ENCODE measurements at regions of chr3 and their contacts with region 1.

Region 1: DNA sequence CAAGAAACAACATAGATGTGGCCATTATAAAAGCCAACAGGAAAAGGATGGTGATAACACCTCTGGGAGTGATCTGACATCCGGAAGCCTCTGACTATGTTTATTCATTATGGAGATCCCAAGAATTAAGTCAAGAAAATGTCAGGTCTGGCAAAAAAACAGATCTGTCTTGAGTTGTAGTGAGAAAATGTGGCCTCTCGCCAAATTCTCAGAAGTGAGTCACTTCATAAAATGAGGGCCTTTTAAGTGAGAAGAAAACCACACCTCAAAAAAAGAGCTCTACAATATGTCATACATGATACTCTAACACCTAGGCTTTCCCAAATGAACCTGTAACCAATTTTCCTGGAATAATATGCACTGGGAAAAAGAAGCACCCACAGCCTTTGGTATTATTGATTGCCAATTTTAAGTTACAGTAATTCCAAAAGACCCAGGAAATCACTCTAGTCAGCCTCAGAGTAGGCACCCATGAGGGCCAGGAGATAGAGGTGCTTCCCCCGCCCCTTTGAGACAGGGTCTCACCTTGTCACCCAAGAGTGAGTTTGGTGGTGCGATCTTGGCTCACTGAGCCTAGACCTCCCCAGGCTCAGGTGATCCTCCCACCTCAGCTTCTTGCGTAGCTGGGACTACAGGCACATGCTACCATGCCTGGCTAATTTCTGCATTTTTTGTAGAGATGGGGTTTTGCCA is 38.0 kb downstream of the CCR3 start:
- DNase-seq: no peak
- H3K4me3 ChIP-seq: no peak overlapping the region
- H3K27ac ChIP-seq: peak overlapping the region in 2 of 4 donors; percentile 6 to 40
- H3K4me1 ChIP-seq: no peaks in the 10 kb centered on the region
- H3K27me3 ChIP-seq: no peaks in the 10 kb centered on the region
- CTCF ChIP-seq: no peak
- EP300 ChIP-seq: no peak
- POLR2A ChIP-seq: no peak

Region 2: GRCh38 chr3:45712472-45713110 is 567.7 kb before region 1 on chr3:
- in situ Hi-C with region 1: no loop called
- intact Hi-C with region 1: no loop called
- DNase-seq: no peak
- H3K4me3 ChIP-seq: no peak overlapping the region
- H3K27ac ChIP-seq: no peak overlapping the region
- H3K4me1 ChIP-seq: no peaks in the 10 kb centered on the region
- H3K27me3 ChIP-seq: no peaks in the 10 kb centered on the region
- CTCF ChIP-seq: no peak
- EP300 ChIP-seq: no peak
- POLR2A ChIP-seq: no peak

Region 3: GRCh38 chr3:46186471-46187340 is 93.5 kb before region 1 on chr3:
- in situ Hi-C with region 1: no loop called
- intact Hi-C with region 1: no loop called
- DNase-seq: no peak
- H3K4me3 ChIP-seq: no peak overlapping the region
- H3K27ac ChIP-seq: no peak overlapping the region
- H3K4me1 ChIP-seq: peaks cover 0 to 12% (median 0%) of the 10 kb centered on the region in 4 donors
- H3K27me3 ChIP-seq: no peaks in the 10 kb centered on the region
- CTCF ChIP-seq: no peak
- EP300 ChIP-seq: no peak
- POLR2A ChIP-seq: no peak

Region 4: DNA sequence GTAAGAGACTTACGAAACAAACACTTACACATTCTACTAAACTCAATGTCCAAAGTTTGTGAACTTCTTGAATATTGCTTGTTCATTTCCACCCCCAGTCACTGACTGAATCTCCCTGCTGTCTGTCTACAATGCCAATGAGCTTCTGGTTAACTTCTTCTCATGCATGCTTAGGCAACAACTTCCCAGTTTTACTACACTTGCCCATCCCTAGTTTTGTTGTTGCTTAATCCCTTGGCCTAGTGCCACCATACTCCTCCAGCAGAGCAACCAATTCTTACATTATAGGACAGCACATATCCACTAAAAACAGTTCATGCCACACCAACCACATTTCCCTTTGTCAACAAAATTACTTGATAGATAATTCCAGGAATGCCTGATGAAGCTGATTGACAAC is 32.7 kb after region 1 on chr3:
- in situ Hi-C with region 1: no loop called
- intact Hi-C with region 1: no loop called
- DNase-seq: peak; percentile 44
- H3K4me3 ChIP-seq: no peak overlapping the region
- H3K27ac ChIP-seq: no peak overlapping the region
- H3K4me1 ChIP-seq: no peaks in the 10 kb centered on the region
- H3K27me3 ChIP-seq: no peaks in the 10 kb centered on the region
- CTCF ChIP-seq: no peak
- EP300 ChIP-seq: no peak
- POLR2A ChIP-seq: no peak

Region 5: GRCh38 chr3:46368569-46368968 is 88.3 kb after region 1 on chr3:
- in situ Hi-C with region 1: loop called in 2 of 4 experiments (anchors 5 to 10 kb)
- intact Hi-C with region 1: no loop called
- DNase-seq: peak; percentile 77
- H3K4me3 ChIP-seq: no peak overlapping the region
- H3K27ac ChIP-seq: peak overlapping the region in 3 of 4 donors; percentile 17 to 56 (median 36)
- H3K4me1 ChIP-seq: no peaks in the 10 kb centered on the region
- H3K27me3 ChIP-seq: no peaks in the 10 kb centered on the region
- CTCF ChIP-seq: peak in 3 of 5 experiments; percentile 18 to 33 (median 24)
- EP300 ChIP-seq: no peak
- POLR2A ChIP-seq: no peak

Measured in transverse colon (tissue), 4 donors.